Posterior vena cava (tissue), 2 donors: ENCODE measurements at regions of chr14 and their contacts with region 1.

Region 1: GRCh38 chr14:35404449-35405303 is at the start of gene NFKBIA:
- DNase-seq: peak; percentile 98
- total RNA-seq, gene NFKBIA: 87.1 to 127 TPM

Region 2: GRCh38 chr14:35046048-35046741 is 358.5 kb before region 1 on chr14 and contains the start of gene FAM177A1:
- intact Hi-C with region 1: loop called in 1 of 2 experiments (anchors 10 kb)
- DNase-seq: peak; percentile 100
- total RNA-seq, gene FAM177A1: 69.2 to 84.8 TPM

Region 3: DNA sequence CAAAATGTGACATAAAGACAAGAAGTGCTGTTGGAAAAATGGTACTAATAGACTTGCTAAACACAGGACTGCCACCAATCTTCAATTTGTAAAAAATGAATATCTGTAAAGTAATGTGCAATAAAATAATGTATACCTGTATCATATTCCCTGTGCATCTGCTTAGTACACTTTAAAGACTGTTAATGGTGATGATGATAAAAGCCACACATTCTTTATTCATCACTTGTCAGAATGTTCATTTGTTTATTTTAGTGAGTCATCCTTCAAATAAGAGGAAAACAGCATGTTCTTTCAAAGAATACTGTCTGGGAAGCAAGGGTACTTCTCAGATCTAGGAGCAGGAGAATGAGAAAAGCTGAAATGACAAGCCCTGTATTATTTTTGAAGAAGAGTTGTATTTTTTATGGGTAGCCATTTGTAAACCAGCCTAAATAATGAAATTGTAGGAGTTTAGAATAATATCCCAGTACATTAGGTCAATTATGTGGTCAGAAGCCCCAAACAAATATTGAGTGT is 190.7 kb before region 1 on chr14:
- intact Hi-C with region 1: loop called (anchors 5 kb)
- DNase-seq: no peak

Region 4: DNA sequence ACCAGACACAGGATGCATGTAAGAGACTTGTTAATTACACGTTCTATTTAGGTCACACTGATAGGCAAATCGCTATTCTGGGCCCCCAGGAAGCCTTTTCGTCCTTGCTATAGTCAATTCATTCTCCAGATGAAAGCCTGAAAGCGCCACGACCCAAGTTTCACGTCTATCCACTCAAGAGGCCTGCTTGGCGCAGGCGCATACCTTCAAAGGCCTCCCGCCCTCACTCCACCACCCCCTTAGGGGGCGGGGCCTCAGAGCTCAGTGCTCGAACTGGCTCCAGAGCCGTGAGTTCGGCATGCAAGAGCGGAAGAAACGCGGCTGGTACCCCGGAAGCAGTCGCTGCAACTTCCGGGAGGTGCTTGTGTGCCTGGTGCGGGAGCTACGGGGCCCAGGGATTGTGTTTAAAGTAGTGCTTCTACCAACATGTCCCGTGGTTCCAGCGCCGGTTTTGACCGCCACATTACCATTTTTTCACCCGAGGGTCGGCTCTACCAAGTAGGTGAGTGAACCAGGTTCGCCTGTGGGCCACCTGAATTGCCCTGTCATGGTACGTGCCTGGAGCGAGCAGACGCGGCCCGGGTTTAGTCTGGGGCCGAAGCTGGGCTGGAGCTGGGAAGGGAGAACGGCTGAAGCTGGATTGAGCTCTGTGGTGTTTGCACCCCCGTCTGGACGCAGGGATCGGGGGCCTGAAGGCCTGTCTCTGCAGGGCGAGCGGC is 112.5 kb before region 1 on chr14 and contains the start of gene PSMA6:
- intact Hi-C with region 1: loop called (anchors 5 kb)
- DNase-seq: peak; percentile 99
- total RNA-seq, gene PSMA6: 159 to 191 TPM

Region 5: GRCh38 chr14:35336494-35337268 is 68.0 kb before region 1 on chr14:
- intact Hi-C with region 1: loop called in 1 of 2 experiments (anchors 5 kb)
- DNase-seq: peak; percentile 97

Region 6: DNA sequence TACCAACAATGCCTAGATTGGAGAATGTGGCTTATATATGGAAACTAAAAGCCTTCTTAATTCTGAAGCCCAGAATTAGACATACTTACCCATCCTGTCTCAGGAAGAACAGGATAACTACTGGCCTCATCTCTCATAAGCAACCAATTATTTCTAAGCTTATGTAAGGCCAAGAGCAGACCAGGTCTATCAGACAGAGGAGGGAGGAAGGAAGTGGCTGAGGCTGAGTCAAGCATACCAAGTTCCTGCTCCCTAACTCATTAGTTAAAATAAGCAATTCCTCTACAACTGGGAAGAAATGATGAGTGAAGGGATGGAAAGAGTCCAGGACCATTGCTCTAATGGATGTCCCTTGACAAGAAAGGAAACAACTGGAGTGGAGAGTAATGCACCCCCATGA is 102.3 kb after region 1 on chr14:
- intact Hi-C with region 1: no loop called
- DNase-seq: no peak

Region 7: GRCh38 chr14:35519986-35520385 is 115.3 kb after region 1 on chr14:
- intact Hi-C with region 1: no loop called
- DNase-seq: no peak